Heart right ventricle (tissue), 16 donors: ENCODE measurements at regions of chrX and their contacts with region 1.

Region 1: DNA sequence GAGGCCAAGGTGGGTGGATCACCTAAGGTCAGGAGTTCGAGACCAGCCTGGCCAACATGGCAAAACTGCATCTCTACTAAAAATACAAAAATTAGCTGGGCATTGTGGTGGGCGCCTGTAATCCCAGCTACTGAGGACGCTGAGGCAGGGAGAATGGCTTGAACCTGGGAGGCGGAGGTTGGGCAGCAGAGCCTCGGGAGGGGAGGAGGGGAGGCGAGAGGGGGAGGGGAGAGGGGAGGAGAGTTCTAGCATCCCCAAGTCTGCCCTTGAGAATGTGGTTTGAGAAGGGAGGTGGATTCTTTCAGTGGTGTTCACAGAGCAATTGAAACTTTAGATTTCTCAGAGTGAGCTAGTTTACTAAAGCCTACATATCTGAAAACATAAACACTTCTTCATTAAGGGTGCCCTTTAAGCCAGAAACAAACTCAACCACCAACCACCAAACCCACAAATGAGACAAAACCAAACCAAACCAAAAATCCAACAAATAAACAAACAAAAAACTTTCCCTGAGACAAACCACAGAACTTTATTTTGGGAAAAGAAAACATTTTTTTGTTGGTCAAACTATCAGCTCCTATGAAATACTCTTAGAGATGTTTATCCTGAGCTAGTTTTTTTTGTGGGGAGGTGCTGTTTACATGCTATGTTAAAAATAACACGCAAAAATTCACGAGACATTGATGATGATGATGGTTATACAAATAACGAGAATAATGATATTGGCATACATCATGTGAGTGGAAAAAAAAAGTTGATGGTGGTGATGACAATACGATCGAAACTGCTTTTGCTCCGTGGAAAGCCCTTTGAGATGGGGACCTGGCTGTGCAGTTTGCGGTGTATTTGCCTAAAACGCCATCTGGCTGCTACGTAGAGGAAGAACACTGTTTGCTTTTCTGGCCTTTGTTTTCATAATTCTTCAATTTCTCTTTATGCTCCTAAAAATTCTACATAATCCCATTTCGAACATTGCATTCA is 98.2 kb upstream of the PRKX start:
- DNase-seq: peak in 1 of 2 donors; percentile 12
- ATAC-seq: no peak
- H3K4me3 ChIP-seq: no peak overlapping the region
- H3K27ac ChIP-seq: no peak overlapping the region
- H3K4me1 ChIP-seq: peaks cover 0 to 15% (median 5%) of the 10 kb centered on the region in 9 donors
- H3K27me3 ChIP-seq: peaks cover 0 to 18% (median 3%) of the 10 kb centered on the region in 7 donors
- CTCF ChIP-seq: peak in 7 of 9 donors; percentile 12 to 67 (median 58)

Region 2: GRCh38 chrX:3518870-3519269 is 292.8 kb before region 1 on chrX:
- intact Hi-C with region 1: no loop called
- DNase-seq: peak; percentile 17 to 35
- ATAC-seq: peak in 7 of 8 donors; percentile 46 to 82 (median 63)
- H3K4me3 ChIP-seq: no peak overlapping the region
- H3K27ac ChIP-seq: peak overlapping the region in 3 of 10 donors; percentile 31 to 73 (median 53)
- H3K4me1 ChIP-seq: peaks cover 0 to 6% (median 0%) of the 10 kb centered on the region in 9 donors
- H3K27me3 ChIP-seq: no peaks in the 10 kb centered on the region
- CTCF ChIP-seq: no peak

Region 3: GRCh38 chrX:3651276-3651675 is 160.3 kb before region 1 on chrX:
- intact Hi-C with region 1: loop called in 5 of 10 experiments (anchors 2 to 5 kb)
- DNase-seq: no peak
- ATAC-seq: no peak
- H3K4me3 ChIP-seq: no peak overlapping the region
- H3K27ac ChIP-seq: no peak overlapping the region
- H3K4me1 ChIP-seq: no peaks in the 10 kb centered on the region
- H3K27me3 ChIP-seq: no peaks in the 10 kb centered on the region
- CTCF ChIP-seq: peak in 8 of 9 donors; percentile 30 to 64 (median 50)

Region 4: GRCh38 chrX:3659761-3660160 is 151.9 kb before region 1 on chrX:
- intact Hi-C with region 1: loop called in 4 of 10 experiments (anchors 5 kb)
- DNase-seq: no peak
- ATAC-seq: no peak
- H3K4me3 ChIP-seq: no peak overlapping the region
- H3K27ac ChIP-seq: no peak overlapping the region
- H3K4me1 ChIP-seq: peaks cover 0 to 8% (median 0%) of the 10 kb centered on the region in 9 donors
- H3K27me3 ChIP-seq: no peaks in the 10 kb centered on the region
- CTCF ChIP-seq: no peak

Region 5: DNA sequence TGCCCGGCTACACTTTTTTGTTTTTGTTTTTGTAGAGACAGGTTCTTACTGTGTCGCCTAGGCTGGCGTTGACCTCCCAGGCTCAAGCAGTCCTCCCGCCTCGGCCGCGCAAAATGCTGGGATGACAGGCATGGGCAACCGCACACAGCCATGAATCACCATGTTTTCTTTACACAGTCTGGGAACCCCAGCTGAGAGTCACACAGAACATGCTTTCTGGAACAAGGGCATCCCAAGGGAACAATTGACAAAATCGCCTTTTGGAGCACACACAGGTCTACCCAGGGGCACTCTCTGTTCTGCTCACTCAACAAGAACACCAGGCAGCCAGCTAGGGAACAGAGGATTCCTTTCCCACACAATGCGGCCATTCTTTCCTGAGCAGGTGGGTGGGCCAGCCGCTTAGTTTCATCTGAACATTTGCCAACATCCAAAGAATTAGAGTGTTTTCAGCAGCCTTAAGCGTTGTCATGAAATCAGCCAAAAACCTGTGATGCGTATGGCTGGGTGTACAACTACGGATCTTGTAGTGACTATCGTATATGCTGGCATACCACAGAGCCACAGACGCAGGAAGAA is 113.8 kb before region 1 on chrX:
- intact Hi-C with region 1: loop called in 1 of 10 experiments (anchors 10 kb)
- DNase-seq: peak; percentile 22 to 25
- ATAC-seq: peak in 7 of 8 donors; percentile 68 to 92 (median 86)
- H3K4me3 ChIP-seq: peak overlapping the region in 1 of 10 donors; percentile 9
- H3K27ac ChIP-seq: peak overlapping the region in 7 of 10 donors; percentile 7 to 46 (median 40)
- H3K4me1 ChIP-seq: peaks cover 0 to 65% (median 3%) of the 10 kb centered on the region in 9 donors
- H3K27me3 ChIP-seq: no peaks in the 10 kb centered on the region
- CTCF ChIP-seq: no peak

Region 6: DNA sequence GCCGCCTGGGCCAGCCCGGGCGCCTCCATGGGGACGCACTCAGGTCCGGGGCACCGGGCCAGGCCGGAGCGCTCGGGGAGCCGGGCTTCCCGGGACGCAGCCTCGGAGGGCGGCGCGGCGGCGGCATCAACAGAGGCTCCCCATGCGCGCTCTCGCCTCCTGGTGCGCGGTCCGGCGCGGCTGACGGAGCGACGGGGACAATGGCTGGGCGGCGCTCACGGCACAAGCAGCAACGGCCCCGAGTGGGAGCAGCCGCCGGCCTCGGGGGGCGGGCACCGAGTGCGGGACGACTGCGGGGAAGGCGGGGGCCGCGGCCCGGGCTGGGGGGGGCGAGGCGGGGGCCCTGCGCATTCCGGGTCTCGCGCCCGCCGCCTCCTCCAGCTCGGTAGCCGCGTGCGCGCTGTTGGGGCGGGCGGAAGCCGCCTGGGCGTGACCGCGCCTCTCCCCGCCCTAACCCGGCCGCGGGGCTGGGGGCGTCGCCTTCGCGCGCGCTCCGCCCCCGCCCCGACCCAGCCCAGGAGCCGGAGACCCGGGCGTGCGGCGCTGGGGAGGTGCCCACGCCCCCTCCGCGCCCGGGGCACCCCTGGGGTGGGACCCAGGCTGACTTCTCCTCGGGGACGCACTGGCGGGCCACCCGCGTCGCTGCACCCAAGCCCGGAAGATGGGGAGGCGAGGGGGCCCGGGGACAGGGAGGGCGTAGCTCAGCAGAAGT is 98.2 kb before region 1 on chrX and contains the start of gene PRKX:
- intact Hi-C with region 1: loop called in 1 of 10 experiments (anchors 10 kb)
- DNase-seq: peak; percentile 26 to 53
- ATAC-seq: peak; percentile 65 to 94 (median 84)
- H3K4me3 ChIP-seq: peak within 1 kb of the TSS; percentile 63 to 82 (median 68)
- H3K27ac ChIP-seq: peak within 1 kb of the TSS; percentile 75 to 90 (median 82)
- H3K4me1 ChIP-seq: peaks cover 0 to 9% (median 0%) of the 10 kb centered on the region in 9 donors
- H3K27me3 ChIP-seq: peaks cover 0 to 20% (median 0%) of the 10 kb centered on the region in 7 donors
- CTCF ChIP-seq: no peak
- total RNA-seq, gene PRKX: 1.7 to 10.1 (median 3.4) TPM

Region 7: GRCh38 chrX:3743801-3744439 is 67.7 kb before region 1 on chrX:
- intact Hi-C with region 1: no loop called
- DNase-seq: no peak
- ATAC-seq: no peak
- H3K4me3 ChIP-seq: no peak overlapping the region
- H3K27ac ChIP-seq: peak overlapping the region in 1 of 10 donors; percentile 31
- H3K4me1 ChIP-seq: no peaks in the 10 kb centered on the region
- H3K27me3 ChIP-seq: no peaks in the 10 kb centered on the region
- CTCF ChIP-seq: no peak

Region 8: DNA sequence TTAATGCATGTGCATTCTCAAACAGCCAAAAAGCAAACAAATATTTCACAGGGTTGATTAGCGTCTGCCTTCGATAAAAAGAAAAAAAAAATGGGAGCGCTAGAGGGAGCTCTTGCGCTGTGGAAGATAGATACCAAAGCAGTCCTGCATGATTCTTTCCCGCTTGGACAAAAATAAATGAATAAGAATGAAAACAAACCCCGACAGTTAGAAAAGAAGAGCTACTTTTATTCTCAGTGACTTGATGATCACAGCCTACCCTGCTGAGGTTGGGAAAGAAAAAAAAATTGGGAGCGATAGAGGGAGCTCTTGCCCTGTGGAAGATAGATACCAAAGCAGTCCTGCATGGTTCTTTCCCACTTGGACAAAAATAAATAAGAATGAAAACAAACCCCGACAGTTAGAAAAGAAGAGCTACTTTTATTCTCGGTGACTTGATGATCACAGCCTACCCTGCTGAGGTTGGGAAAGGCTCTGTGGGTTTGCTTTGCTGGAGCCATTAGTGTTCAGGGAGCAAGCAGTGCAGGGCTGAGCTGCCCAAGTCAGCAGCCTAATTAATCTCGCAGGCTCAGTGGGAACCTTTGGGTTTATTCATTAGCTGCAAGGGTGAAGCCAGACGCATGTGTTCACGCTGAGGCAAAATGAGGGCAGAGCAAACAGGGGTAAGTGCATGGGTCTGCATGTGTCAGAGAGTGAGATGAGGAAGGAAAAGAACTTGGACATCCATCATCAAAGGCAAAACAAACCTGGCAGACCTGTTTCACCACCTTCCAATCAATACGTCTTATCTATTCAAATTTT is 151.1 kb after region 1 on chrX:
- intact Hi-C with region 1: no loop called
- DNase-seq: no peak
- ATAC-seq: no peak
- H3K4me3 ChIP-seq: no peak overlapping the region
- H3K27ac ChIP-seq: no peak overlapping the region
- H3K4me1 ChIP-seq: no peaks in the 10 kb centered on the region
- H3K27me3 ChIP-seq: peaks cover 0 to 9% (median 0%) of the 10 kb centered on the region in 7 donors
- CTCF ChIP-seq: peak in 7 of 9 donors; percentile 19 to 56 (median 48)